Aorta (tissue), 5 donors: ENCODE measurements at regions of chr9 and their contacts with region 1.

Region 1: DNA sequence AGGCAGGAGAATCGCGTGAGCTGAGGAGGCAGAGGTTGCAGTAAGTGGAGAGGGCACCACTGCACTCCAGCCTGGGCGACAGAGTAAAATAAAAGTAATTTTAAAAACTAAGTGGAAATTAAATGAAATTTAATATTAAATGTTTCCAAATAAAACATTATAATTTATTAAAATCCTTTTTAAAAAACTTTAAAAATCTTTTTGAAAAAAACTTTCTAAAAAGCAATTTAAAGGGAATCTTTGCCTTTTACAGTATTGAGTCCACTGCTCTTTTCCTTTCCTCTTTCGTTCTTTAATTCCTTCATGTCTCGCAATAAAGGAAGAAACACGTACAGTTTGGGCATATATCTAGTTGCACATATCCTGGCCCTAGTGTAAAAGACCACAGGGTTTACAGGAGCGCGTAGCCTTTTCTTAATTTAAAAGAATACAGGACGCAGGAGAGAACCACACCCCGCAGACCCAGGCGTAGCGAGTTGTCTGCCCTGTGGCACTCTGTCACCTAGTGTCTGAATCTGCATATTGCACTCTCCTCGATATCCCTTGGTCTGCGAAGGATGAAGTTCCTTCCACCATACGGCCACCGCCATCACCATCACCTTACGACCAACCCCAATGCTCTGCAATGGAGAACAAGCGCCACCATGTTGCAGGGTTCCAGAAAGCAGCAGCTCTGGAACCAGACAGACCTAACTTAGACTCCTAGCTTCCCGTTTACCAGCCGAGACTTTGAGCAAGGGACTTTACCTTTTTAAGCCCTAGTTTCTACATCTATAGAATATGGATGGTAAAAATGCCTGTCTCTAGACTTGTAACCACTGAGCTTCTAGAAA is 77.6 kb upstream of the DMRT1 start:
- DNase-seq: peak; percentile 77 to 80
- ATAC-seq: peak; percentile 95
- H3K4me3 ChIP-seq: no peak overlapping the region
- H3K27ac ChIP-seq: no peak overlapping the region
- H3K4me1 ChIP-seq: peaks cover 0 to 2% of the 10 kb centered on the region in 2 donors
- H3K27me3 ChIP-seq: no peaks in the 10 kb centered on the region

Region 2: GRCh38 chr9:806285-807156 is 42.6 kb after region 1 on chr9:
- intact Hi-C with region 1: loop called in 1 of 2 experiments (anchors 5 kb)
- DNase-seq: no peak
- ATAC-seq: no peak
- H3K4me3 ChIP-seq: no peak overlapping the region
- H3K27ac ChIP-seq: no peak overlapping the region
- H3K4me1 ChIP-seq: no peaks in the 10 kb centered on the region
- H3K27me3 ChIP-seq: no peaks in the 10 kb centered on the region

Region 3: DNA sequence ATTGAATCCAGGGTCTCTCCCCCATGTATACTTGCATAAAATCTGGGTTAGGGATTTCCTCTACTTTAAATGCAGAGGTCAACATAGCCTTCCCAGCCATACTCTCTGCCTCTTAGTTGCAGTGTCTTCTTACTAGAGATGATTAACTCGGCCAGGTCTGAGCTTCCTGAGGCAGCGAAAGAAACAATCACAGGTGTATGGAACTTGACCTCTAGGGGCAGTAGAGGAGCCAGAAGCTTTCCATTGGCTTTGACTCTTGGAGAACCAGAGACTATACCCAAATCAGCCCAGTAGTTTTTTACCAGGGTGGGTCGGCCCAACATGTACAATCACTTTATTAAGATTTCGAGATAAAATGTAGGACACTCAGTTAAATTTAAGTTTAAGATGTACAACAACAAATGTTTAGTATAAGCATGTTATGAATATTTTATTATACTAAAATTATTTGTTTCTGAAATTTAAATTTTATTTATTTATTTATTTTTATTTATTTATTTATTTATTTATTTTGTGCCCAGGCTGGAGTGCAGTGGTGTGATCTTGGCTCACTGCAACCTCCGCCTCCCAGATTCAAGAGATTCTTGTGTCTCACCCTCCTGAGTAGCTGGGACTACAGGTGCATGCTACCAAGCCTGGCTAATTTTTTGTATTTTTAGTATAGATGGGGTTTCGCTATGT is 164.6 kb after region 1 on chr9:
- intact Hi-C with region 1: no loop called
- DNase-seq: no peak
- ATAC-seq: no peak
- H3K4me3 ChIP-seq: no peak overlapping the region
- H3K27ac ChIP-seq: no peak overlapping the region
- H3K4me1 ChIP-seq: no peaks in the 10 kb centered on the region
- H3K27me3 ChIP-seq: peaks cover 0 to 2% of the 10 kb centered on the region in 2 donors

Region 4: GRCh38 chr9:994005-994404 is 230.1 kb after region 1 on chr9:
- intact Hi-C with region 1: loop called in 1 of 2 experiments (anchors 10 kb)
- DNase-seq: no peak
- ATAC-seq: no peak
- H3K4me3 ChIP-seq: no peak overlapping the region
- H3K27ac ChIP-seq: no peak overlapping the region
- H3K4me1 ChIP-seq: no peaks in the 10 kb centered on the region
- H3K27me3 ChIP-seq: no peaks in the 10 kb centered on the region